Dorsolateral prefrontal cortex (tissue), 120 donors: ENCODE measurements at regions of chr1 and their contacts with region 1.

Region 1: DNA sequence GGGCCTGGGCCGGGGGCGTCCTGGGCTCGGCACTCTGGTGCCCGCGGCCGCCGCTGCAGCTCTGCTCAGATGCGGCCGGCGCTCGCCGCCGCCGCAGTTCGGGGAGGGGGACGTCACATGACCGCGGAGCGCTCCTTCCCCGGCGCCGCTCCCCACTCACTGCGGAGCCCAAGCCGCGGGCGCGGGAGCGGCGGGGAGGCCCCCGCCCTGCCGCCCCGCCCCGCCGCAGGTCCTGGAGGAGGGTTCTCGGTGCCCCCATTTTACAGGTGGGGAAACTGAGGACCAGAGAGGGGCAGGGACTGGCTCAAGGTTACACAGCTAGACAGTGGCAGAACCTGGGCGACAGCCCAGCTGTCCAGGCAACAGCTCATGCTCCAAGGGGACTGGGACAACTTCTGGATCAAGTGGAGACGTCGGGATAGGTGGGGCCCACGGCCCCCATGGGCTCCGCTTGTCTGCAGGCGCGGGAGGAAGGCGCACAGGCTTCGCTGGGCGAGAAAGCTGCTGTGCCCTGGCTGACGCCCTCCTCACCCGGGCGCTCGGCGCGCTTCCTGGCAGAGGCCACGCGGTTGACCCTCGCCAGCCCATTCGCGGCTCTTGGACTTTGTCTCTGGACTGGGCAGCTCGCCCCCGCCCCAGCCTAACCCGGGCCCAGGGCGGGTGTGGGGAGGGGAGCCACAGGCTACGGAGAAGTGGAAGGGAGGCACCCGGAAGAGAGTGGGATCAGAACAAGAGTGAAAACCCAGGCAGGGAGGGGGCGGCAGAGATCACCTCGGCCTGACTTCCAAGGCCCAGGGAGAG is at the start of gene RAP1GAP:
- DNase-seq: peak in 5 of 10 donors; percentile 58 to 82 (median 80)
- H3K4me3 ChIP-seq: peak within 1 kb of the TSS; percentile 39 to 78 (median 64)
- H3K27ac ChIP-seq: peak within 1 kb of the TSS in 56 of 59 donors; percentile 24 to 93 (median 82)
- H3K27me3 ChIP-seq: peaks cover 0 to 10% (median 0%) of the 10 kb centered on the region in 45 donors
- CTCF ChIP-seq: peak in 2 of 56 donors; percentile 4 to 5
- total RNA-seq, gene RAP1GAP: 108 to 286 (median 187) TPM

Region 2: DNA sequence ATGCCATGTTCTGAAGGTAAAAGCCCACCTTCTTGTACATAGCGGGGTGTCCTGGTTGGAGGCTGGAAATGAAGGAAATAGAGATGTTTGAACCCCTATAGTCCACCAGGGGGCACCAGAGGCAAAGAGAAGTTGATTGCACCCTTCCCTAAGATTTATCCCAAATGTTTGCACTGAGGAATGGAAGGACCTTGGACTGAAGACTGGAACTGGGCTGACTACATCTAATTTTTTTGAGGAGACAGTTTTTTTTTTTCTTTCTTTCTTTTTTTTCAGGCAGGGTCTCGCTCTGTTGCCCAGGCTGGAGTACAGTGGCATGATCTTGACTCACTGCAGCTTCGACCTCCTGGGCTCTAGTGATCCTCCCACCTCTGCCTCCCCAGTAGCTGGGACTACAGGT is 437.4 kb before region 1 on chr1:
- intact Hi-C with region 1: loop called in 1 of 2 experiments (anchors 10 kb)
- DNase-seq: peak in 2 of 10 donors; percentile 56 to 70
- H3K4me3 ChIP-seq: no peak overlapping the region
- H3K27ac ChIP-seq: no peak overlapping the region
- H3K27me3 ChIP-seq: no peaks in the 10 kb centered on the region
- CTCF ChIP-seq: peak; percentile 73 to 95 (median 82)

Region 3: DNA sequence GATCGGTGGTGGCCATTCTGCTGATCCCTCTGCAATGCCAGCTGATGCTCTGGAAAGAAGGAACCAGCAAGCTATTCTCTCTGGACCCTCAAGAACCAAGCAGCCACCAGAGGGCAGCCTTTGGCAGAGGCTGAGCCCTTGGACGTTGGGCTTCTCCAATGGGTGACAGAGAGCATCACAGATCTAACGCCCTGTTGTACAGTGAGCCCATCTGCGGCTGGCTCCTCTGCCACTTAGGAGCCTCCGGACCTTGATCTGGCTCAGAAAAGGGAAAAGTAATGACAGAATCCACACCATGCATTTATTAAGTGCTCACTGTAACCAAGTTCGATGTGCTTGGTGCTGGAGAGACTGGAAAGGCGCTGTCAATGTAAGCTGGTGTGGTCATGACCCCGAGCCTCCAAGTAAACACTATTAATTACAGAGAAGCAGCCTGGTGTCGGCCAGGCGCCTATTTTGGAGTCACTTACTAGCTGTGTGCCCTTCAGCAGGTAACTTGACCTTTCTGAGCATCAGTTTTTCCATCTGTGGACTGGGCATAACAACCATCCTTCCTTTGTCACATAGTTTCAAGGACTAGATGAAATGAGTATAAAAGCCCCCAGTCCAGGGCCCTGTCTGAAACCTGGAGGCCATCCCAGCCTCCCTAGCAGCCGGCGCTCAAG is 414.0 kb before region 1 on chr1:
- intact Hi-C with region 1: loop called in 1 of 2 experiments (anchors 10 kb)
- DNase-seq: peak; percentile 88 to 97 (median 93)
- H3K4me3 ChIP-seq: peak overlapping the region in 1 of 59 donors; percentile 10
- H3K27ac ChIP-seq: peak overlapping the region in 58 of 59 donors; percentile 18 to 95 (median 83)
- H3K27me3 ChIP-seq: no peaks in the 10 kb centered on the region
- CTCF ChIP-seq: peak; percentile 76 to 98 (median 94)

Region 4: GRCh38 chr1:21344750-21345443 is 324.6 kb before region 1 on chr1:
- intact Hi-C with region 1: loop called in 1 of 2 experiments (anchors 10 kb)
- DNase-seq: peak in 1 of 10 donors; percentile 31
- H3K4me3 ChIP-seq: peak overlapping the region; percentile 59 to 93 (median 82)
- H3K27ac ChIP-seq: peak overlapping the region in 58 of 59 donors; percentile 32 to 93 (median 82)
- H3K27me3 ChIP-seq: no peaks in the 10 kb centered on the region
- CTCF ChIP-seq: no peak

Region 5: DNA sequence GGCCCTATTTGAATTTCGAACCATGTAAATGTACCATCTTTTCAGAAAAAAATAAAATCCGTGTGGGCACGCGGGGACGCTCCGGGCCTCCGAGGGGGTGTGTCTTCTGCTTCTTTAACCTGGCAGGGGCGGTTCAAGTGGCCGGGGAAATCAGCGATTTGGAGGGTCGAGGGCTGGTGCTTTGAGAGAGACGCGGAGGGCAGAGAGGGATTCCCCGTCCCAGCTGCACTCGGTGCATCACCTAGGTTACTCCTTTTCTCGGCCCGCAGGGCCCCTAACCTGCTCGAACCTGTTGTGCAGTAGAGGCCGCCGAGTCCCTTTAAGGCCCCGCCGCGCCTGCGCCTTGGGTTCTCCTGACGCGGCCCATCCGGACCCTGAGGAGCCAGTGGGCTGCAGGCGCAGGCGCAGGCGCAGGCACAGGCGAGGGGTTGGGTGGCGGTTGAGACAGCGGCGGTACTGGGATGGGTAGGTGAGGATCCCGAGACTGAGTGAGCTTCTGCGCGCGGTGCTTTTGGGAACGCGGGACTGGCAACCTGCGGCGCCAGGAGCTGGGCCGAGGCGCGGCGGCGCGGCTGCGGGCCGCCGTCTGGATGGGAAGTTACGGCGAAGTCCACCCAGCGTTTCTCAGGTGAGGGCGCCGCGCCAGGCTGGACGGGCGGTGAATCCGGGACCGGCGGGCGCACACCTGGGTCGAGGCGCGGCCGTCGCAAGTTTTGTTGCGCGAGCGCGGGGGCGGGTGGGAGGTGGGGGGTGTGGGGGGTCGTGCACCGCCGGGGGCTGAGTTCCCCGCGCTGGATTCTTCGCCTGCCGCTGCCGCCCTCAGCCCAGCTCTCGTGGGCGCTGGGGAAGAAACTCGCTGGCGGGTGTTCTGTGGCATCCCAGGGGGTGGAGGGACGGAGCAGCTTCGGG is 229.5 kb before region 1 on chr1 and contains the start of gene NBPF3:
- intact Hi-C with region 1: no loop called
- DNase-seq: peak; percentile 73 to 95 (median 87)
- H3K4me3 ChIP-seq: peak within 1 kb of the TSS; percentile 51 to 94 (median 74)
- H3K27ac ChIP-seq: peak within 1 kb of the TSS in 35 of 59 donors; percentile 5 to 90 (median 48)
- H3K27me3 ChIP-seq: peaks cover 0 to 4% (median 0%) of the 10 kb centered on the region in 45 donors
- CTCF ChIP-seq: peak in 11 of 56 donors; percentile 3 to 32 (median 13)
- total RNA-seq, gene NBPF3: 5.8 to 19.1 (median 12.2) TPM

Region 6: GRCh38 chr1:21956720-21957552 is 287.5 kb after region 1 on chr1:
- intact Hi-C with region 1: loop called in 1 of 2 experiments (anchors 10 kb)
- DNase-seq: no peak
- H3K4me3 ChIP-seq: no peak overlapping the region
- H3K27ac ChIP-seq: no peak overlapping the region
- H3K27me3 ChIP-seq: no peaks in the 10 kb centered on the region
- CTCF ChIP-seq: no peak